A549 (cell line): ENCODE measurements at regions of chr6 and their contacts with region 1.

Region 1: GRCh38 chr6:170529839-170530469 is 23.2 kb downstream of the PSMB1 start:
- DNase-seq: peak; percentile 57 to 67
- ATAC-seq: peak; percentile 81 to 95
- H3K4me3 ChIP-seq: no peak overlapping the region
- H3K27ac ChIP-seq: no peak overlapping the region
- H3K4me1 ChIP-seq: no peaks in the 10 kb centered on the region
- CTCF ChIP-seq: peak; percentile 72
- EP300 ChIP-seq: no peak
- POLR2A ChIP-seq: no peak
- RAD21 ChIP-seq: peak; percentile 78 to 81

Region 2: DNA sequence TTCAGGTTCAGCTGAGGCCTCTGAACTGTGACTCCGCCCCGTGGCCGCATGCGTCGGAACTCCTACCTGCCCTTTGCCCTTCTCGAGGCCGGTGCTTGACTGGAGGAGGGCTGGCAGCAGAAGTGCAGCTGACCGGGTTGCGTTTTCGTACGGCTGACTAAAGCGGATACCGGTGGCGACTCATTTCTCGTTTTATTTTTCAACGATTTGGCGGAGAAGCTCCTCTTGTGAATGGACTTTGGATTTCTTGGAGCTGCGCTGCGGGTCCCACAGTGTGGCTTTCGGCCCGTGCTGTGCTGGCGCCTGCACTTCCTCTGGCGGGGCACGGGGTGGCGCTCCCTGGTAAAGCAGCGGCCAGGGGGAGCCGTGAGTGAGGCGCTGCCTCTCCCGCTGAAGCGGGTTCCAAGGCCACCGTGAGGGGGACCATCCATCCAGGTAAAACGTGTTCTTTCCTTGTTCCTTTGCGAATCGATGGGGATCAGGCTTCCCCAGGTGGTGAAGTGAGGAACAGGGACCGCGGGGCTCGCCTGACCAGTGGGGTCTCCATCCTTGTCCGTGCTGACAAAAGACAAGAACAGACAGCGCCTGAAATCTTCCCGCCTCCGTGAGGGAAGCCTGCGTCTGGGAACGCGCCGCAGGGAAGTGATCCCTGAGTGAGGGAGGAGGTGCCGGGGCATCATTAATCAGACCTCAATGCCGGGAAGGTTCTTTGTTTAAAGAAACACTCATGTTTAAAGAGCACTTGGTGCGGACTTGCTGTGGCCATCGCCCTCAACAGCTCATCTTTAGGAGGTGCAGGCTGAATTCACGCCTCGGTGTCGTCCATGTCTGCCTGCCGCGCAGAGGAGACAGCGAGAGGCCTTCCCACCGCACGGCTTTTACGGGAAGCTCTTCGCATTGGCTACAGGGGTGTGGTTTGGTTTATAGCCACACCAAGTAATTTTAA is 739.7 kb before region 1 on chr6:
- CTCF ChIA-PET with region 1: interaction called, 23 read pairs
- POLR2A ChIA-PET with region 1: no interaction called
- DNase-seq: peak; percentile 67 to 73
- ATAC-seq: peak; percentile 96 to 99
- H3K4me3 ChIP-seq: peak overlapping the region; percentile 50
- H3K27ac ChIP-seq: peak overlapping the region; percentile 71 to 84
- H3K4me1 ChIP-seq: 0 out of 3 replicates have a peak, but pooled peaks cover 5% of the 10 kb centered on the region
- CTCF ChIP-seq: peak; percentile 78
- EP300 ChIP-seq: no peak
- POLR2A ChIP-seq: 0 out of 2 replicates have a peak, but pooled peaks have one; percentile 10
- RAD21 ChIP-seq: peak; percentile 80 to 90

Region 3: DNA sequence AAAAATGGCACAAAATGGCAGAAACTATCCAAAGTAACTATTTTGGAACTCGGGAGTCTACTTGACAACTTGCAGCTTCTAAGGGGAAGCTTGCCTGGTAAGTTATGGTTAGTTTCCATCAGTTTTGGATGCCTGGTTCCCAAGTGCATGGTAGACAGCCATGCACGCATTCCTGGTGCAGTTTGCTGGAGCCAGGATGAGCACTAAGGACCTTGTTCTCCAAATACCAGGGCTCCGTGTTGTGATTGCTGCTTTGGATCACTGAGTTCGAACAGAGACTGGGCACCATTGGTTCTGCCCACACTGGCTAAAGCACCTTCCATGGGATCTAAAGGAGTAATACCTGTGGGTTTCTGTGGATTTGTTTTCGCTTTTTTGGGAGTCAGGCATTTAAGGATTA is 119.7 kb before region 1 on chr6:
- CTCF ChIA-PET with region 1: no interaction called
- POLR2A ChIA-PET with region 1: no interaction called
- DNase-seq: no peak
- ATAC-seq: no peak
- H3K4me3 ChIP-seq: no peak overlapping the region
- H3K27ac ChIP-seq: no peak overlapping the region
- H3K4me1 ChIP-seq: no peaks in the 10 kb centered on the region
- CTCF ChIP-seq: no peak
- EP300 ChIP-seq: no peak
- POLR2A ChIP-seq: no peak
- RAD21 ChIP-seq: no peak

Region 4: DNA sequence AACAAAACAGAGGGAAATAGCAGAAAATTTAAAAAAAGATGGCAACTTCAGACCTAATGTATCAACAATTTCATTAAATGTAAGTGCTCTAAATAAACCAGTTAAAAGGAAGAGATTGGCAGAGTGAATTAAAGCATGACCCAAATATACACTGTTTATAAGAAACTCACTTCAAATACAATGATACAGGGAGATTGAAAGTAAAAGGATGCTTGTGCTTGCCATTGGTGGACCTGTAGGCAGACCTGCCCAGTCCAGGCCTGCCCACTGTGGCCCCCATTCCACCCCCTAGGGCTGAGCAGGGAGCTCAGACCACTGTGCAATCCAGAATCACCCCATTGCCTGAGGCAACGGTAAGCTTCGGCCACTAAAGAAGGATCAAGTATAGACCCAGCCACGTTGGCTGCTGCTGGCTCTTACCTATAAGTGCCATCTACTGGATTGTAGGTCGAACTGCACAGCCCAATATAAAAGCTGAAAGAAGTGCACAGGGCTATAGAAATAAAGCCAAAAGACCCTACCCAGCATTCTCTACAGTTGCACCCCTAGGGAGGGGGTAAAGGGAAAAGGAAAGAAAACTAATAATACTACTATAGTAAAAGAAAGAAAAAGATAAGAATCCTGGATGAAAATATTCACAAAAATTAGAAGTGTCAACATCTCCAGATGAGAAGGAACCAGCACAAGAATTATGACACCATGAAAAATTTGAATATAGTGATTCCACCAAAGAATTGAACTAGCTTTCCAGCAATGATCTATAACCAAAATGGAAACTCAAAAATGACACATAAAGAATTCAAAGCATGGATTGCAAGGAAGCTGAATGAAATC is 13.0 kb before region 1 on chr6:
- CTCF ChIA-PET with region 1: interaction called, 12 read pairs
- POLR2A ChIA-PET with region 1: no interaction called
- DNase-seq: peak; percentile 17 to 61
- ATAC-seq: peak; percentile 80 to 88
- H3K4me3 ChIP-seq: no peak overlapping the region
- H3K27ac ChIP-seq: no peak overlapping the region
- H3K4me1 ChIP-seq: no peaks in the 10 kb centered on the region
- CTCF ChIP-seq: peak; percentile 63
- EP300 ChIP-seq: no peak
- POLR2A ChIP-seq: no peak
- RAD21 ChIP-seq: peak; percentile 70 to 76

Region 5: GRCh38 chr6:170542031-170542719 is 12.2 kb after region 1 on chr6:
- CTCF ChIA-PET with region 1: interaction called, 15 read pairs
- POLR2A ChIA-PET with region 1: no interaction called
- DNase-seq: no peak
- ATAC-seq: no peak
- H3K4me3 ChIP-seq: no peak overlapping the region
- H3K27ac ChIP-seq: no peak overlapping the region
- H3K4me1 ChIP-seq: no peaks in the 10 kb centered on the region
- CTCF ChIP-seq: no peak
- EP300 ChIP-seq: no peak
- POLR2A ChIP-seq: no peak
- RAD21 ChIP-seq: no peak